HEK293 (cell line): ENCODE measurements at regions of chr22 and their contacts with region 1.

Region 1: GRCh38 chr22:50306753-50307749 is at the start of gene PLXNB2:
- H3K4me3 ChIP-seq: peak within 1 kb of the TSS; percentile 89
- H3K27ac ChIP-seq: peak within 1 kb of the TSS; percentile 98
- H3K4me1 ChIP-seq: peaks cover 21% of the 10 kb centered on the region
- CTCF ChIP-seq: no peak

Region 2: DNA sequence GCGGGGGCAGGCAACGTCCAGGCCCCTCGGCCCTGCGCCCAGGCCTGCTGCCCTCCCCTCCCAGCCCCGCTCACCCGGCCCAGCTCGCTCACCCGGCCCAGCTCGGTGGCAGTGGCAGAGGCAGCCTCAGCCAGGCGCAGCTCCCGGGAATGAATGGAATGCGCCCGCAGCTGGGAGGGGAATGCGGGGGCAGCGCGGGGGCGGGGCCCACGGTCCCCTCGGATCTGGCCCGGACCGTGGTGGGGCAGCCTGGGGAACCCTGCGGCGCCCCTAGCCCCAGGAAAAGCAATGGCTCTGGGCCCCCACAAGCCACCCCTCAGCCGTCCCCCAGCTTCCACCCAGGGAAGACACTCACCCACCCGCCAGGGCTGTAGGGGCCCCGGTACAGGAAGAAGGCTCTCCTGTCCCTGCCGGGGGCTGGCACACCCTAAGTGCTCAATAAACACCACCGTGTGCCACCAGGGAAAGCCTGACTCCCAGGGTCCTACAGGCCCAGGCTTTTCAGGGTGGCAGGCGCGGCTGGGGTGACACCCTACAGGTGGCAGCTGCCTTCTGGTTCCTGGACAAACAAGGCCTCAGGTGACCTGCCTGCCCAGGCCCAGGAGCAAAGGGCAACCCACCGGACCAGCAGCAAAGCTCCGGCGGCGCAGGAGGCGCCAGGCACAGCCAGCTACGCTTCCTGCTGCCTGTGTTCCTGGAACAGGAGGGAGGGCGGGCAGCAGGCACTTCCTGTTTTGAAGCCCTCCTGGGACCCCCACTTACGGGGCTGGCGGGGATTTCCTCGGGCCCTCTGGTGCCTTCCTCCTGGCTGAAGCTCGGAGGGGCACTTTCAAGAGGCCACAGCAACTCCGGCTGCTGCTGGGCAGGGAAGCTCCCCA is 13.4 kb before region 1 on chr22:
- CTCF ChIA-PET with region 1: interaction called, 8 read pairs
- POLR2A ChIA-PET with region 1: interaction called, 37 read pairs
- H3K4me3 ChIP-seq: no peak overlapping the region
- H3K27ac ChIP-seq: no peak overlapping the region
- H3K4me1 ChIP-seq: no peaks in the 10 kb centered on the region
- CTCF ChIP-seq: no peak